CD14-positive monocyte (primary cell): ENCODE measurements at regions of chr19 and their contacts with region 1.

Region 1: GRCh38 chr19:1652471-1653299 is at the start of gene TCF3:
- DNase-seq: peak; percentile 99
- H3K4me3 ChIP-seq: peak within 1 kb of the TSS; percentile 74 to 85 (median 75)
- H3K4me3 Mint-ChIP-seq: peak within 1 kb of the TSS; percentile 83 to 91
- H3K27ac ChIP-seq: peak within 1 kb of the TSS; percentile 90 to 99
- H3K27ac Mint-ChIP-seq: peak within 1 kb of the TSS; percentile 92 to 97 (median 95)
- H3K4me1 ChIP-seq: peaks cover 32 to 42% of the 10 kb centered on the region in 2 donors
- H3K4me1 Mint-ChIP-seq: peaks cover 33% of the 10 kb centered on the region
- H3K27me3 ChIP-seq: peaks cover 0 to 6% of the 10 kb centered on the region in 2 donors
- H3K27me3 Mint-ChIP-seq: peaks cover 5 to 10% (median 9%) of the 10 kb centered on the region in 3 donors
- CTCF ChIP-seq: no peak
- polyA plus RNA-seq, gene TCF3: 2.4 to 36.2 (median 3.3) TPM

Region 2: GRCh38 chr19:1605236-1606137 is 47.2 kb before region 1 on chr19 and contains the start of gene UQCR11:
- intact Hi-C with region 1: loop called (anchors 1 to 2 kb)
- DNase-seq: peak; percentile 90 to 92 (median 92)
- H3K4me3 ChIP-seq: peak within 1 kb of the TSS; percentile 65 to 99 (median 99)
- H3K4me3 Mint-ChIP-seq: peak within 1 kb of the TSS; percentile 96 to 99
- H3K27ac ChIP-seq: peak within 1 kb of the TSS; percentile 90
- H3K27ac Mint-ChIP-seq: peak within 1 kb of the TSS; percentile 99 to 100 (median 100)
- H3K4me1 ChIP-seq: peaks cover 45 to 54% of the 10 kb centered on the region in 2 donors
- H3K4me1 Mint-ChIP-seq: peaks cover 50% of the 10 kb centered on the region
- H3K27me3 ChIP-seq: peaks cover 0 to 6% of the 10 kb centered on the region in 2 donors
- H3K27me3 Mint-ChIP-seq: peaks cover 3 to 15% (median 7%) of the 10 kb centered on the region in 3 donors
- CTCF ChIP-seq: peak; percentile 62
- polyA plus RNA-seq, gene UQCR11: 55.6 to 731 (median 659) TPM